ENCODE measurements at regions of chr2 and their contacts with region 1.

Region 1: DNA sequence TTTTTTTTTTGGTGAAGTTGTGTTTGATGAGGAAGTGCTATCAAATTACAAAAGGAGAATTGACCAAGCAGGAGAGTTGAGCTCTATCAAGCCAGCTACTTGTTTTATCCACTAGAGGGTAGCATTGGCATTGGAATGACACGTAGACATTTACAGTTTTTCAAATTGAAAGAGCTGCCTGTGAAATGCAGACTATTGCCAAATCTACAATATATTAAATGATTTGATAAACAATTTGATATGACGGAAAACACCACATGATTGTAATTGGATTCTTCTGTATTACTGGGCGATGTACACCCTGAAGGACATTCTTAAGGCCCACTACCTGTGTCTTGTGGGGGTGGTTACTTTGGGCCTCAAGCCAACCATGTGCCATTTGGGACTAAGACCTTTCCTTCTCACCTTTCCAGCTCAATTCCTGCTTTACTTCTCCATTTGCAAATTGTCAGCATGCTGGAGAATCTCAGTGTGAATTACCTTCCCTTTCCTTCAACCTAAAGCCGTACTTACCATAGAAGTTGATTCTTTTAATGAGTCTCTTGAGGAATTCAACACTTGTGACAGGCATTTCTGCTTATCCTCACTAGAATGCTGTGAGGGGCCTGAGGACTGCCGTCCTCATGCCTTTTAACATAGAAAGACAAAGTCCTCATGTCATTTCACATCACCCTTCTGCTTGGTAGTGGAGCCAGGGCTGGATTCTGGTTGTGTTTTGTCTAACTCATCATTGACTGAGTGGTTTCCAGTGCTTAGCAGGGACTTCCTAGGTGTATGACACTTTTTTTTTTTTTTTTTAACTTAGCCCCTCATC is 134.8 kb upstream of the THUMPD2 start:
- DNase-seq: no peak
- ATAC-seq: peak; percentile 76
- H3K4me3 Mint-ChIP-seq: no peak overlapping the region
- H3K27ac Mint-ChIP-seq: peak overlapping the region; percentile 17
- H3K4me1 Mint-ChIP-seq: peaks cover 5% of the 10 kb centered on the region
- H3K27me3 Mint-ChIP-seq: peaks cover 6% of the 10 kb centered on the region
- CTCF ChIP-seq: peak; percentile 79

Region 2: DNA sequence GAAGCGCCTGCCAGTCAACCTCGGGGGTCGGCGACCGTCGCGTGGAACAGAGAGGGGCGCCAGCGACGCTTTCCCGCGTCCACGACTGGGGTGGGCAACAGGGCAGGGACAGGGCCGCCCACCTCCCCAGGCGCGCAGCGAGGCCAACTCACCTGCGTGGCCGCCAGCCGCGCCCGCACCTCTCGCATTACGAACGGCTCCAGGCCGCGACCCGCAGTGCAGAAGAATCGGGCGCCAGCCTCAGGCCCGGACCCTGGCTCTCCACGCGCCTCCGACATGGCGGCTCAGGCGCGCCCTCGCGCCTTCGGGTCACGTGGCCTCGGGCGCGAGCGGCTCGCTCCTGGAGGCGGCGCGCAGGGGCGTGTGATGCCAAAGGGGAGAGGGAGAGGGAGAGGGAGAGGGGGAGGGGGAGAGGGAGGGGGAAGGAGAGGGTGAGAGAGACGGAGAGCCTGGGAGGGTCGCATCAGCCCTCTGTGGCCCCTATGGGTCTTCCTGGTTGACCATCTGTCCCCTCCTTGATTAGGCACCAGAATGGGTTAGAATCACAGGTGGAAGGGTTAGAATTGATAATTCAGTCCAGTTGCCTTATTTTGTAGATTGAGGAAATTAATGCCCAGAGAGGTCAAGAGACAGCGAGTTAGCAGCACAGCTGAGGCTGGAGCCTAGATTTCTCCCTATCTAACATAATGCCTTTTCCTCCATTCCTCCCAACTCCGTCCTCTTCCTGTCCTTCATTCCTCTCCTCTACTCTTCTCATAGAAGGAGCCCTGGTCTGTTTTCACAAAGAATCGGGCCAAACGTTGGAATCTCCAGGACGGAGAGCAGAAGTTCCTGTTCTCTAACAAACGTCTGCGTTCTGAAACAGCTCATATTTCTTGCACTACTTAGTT is 134.6 kb before region 1 on chr2 and contains the start of gene THUMPD2:
- CTCF ChIA-PET with region 1: no interaction called
- POLR2A ChIA-PET with region 1: no interaction called
- intact Hi-C with region 1: no loop called
- DNase-seq: peak; percentile 72
- ATAC-seq: peak; percentile 78
- H3K4me3 Mint-ChIP-seq: peak within 1 kb of the TSS; percentile 96
- H3K27ac Mint-ChIP-seq: peak within 1 kb of the TSS; percentile 91
- H3K4me1 Mint-ChIP-seq: peaks cover 54% of the 10 kb centered on the region
- H3K27me3 Mint-ChIP-seq: no peaks in the 10 kb centered on the region
- CTCF ChIP-seq: no peak
- total RNA-seq, gene THUMPD2: 16.9 to 18.1 TPM

Region 3: GRCh38 chr2:39902103-39902502 is 11.8 kb before region 1 on chr2:
- CTCF ChIA-PET with region 1: interaction called, 10 read pairs
- POLR2A ChIA-PET with region 1: no interaction called
- intact Hi-C with region 1: no loop called
- DNase-seq: no peak
- ATAC-seq: peak; percentile 84
- H3K4me3 Mint-ChIP-seq: no peak overlapping the region
- H3K27ac Mint-ChIP-seq: no peak overlapping the region
- H3K4me1 Mint-ChIP-seq: peaks cover 3% of the 10 kb centered on the region
- H3K27me3 Mint-ChIP-seq: peaks cover 1% of the 10 kb centered on the region
- CTCF ChIP-seq: no peak

Region 4: GRCh38 chr2:40244675-40245074 is 330.8 kb after region 1 on chr2:
- CTCF ChIA-PET with region 1: interaction called, 3 read pairs
- POLR2A ChIA-PET with region 1: no interaction called
- intact Hi-C with region 1: loop called (anchors 10 kb)
- DNase-seq: peak; percentile 33
- ATAC-seq: no peak
- H3K4me3 Mint-ChIP-seq: no peak overlapping the region
- H3K27ac Mint-ChIP-seq: no peak overlapping the region
- H3K4me1 Mint-ChIP-seq: no peaks in the 10 kb centered on the region
- H3K27me3 Mint-ChIP-seq: peaks cover 1% of the 10 kb centered on the region
- CTCF ChIP-seq: peak; percentile 15

Region 5: GRCh38 chr2:40451918-40452605 is 538.2 kb after region 1 on chr2 and contains the start of gene SLC8A1:
- CTCF ChIA-PET with region 1: interaction called, 3 read pairs
- POLR2A ChIA-PET with region 1: no interaction called
- intact Hi-C with region 1: loop called (anchors 10 kb)
- DNase-seq: peak; percentile 30
- ATAC-seq: peak; percentile 51
- H3K4me3 Mint-ChIP-seq: peak within 1 kb of the TSS; percentile 71
- H3K27ac Mint-ChIP-seq: no peak within 1 kb of the TSS
- H3K4me1 Mint-ChIP-seq: peaks cover 23% of the 10 kb centered on the region
- H3K27me3 Mint-ChIP-seq: peaks cover 35% of the 10 kb centered on the region
- CTCF ChIP-seq: no peak
- total RNA-seq, gene SLC8A1: 0.23 to 0.34 TPM

Region 6: GRCh38 chr2:40554668-40555285 is 640.9 kb after region 1 on chr2:
- CTCF ChIA-PET with region 1: interaction called, 22 read pairs
- POLR2A ChIA-PET with region 1: no interaction called
- intact Hi-C with region 1: loop called (anchors 2 kb)
- DNase-seq: peak; percentile 67
- ATAC-seq: peak; percentile 78
- H3K4me3 Mint-ChIP-seq: no peak overlapping the region
- H3K27ac Mint-ChIP-seq: no peak overlapping the region
- H3K4me1 Mint-ChIP-seq: no peaks in the 10 kb centered on the region
- H3K27me3 Mint-ChIP-seq: peaks cover 1% of the 10 kb centered on the region
- CTCF ChIP-seq: peak; percentile 80

Region 7: GRCh38 chr2:41698678-41699422 is 1785.0 kb after region 1 on chr2:
- CTCF ChIA-PET with region 1: interaction called, 11 read pairs
- POLR2A ChIA-PET with region 1: no interaction called
- intact Hi-C with region 1: no loop called
- DNase-seq: peak; percentile 37
- ATAC-seq: no peak
- H3K4me3 Mint-ChIP-seq: no peak overlapping the region
- H3K27ac Mint-ChIP-seq: no peak overlapping the region
- H3K4me1 Mint-ChIP-seq: no peaks in the 10 kb centered on the region
- H3K27me3 Mint-ChIP-seq: peaks cover 9% of the 10 kb centered on the region
- CTCF ChIP-seq: peak; percentile 63

Measured in activated CD8-positive, alpha-beta T cell treated with anti-CD3 and anti-CD28 coated beads for 36 hours (primary cell).